ENCODE measurements at regions of chr14 and their contacts with region 1.

Region 1: DNA sequence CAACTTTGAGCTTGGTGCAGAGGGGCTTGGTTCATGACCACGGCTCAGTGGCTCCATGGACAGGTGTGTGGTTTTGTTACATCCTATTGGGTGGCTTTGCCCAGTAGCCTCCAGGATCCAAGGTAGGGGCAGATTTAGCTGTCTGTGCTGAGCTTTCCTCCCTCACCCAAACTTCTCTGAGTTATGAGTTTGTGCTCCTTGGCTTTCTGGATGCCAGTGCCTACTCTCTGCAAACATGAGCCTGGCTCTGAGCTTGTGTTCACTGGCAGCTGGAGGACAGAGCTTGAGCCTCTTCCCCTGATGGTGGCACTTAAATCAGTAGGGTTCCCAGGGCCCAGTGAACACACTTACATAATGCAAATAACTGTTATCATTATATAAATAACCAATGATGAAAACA is 45.3 kb upstream of the HECTD1 start:
- DNase-seq: no peak
- ATAC-seq: no peak
- H3K4me3 ChIP-seq: no peak overlapping the region
- H3K4me3 Mint-ChIP-seq: no peak overlapping the region
- H3K27ac ChIP-seq: no peak overlapping the region
- H3K27ac Mint-ChIP-seq: no peak overlapping the region
- H3K4me1 ChIP-seq: no peaks in the 10 kb centered on the region
- H3K4me1 Mint-ChIP-seq: no peaks in the 10 kb centered on the region
- H3K27me3 ChIP-seq: no peaks in the 10 kb centered on the region
- H3K27me3 Mint-ChIP-seq: peaks cover 0 to 3% of the 10 kb centered on the region in 2 donors

Region 2: GRCh38 chr14:31230559-31230958 is 22.3 kb before region 1 on chr14:
- CTCF ChIA-PET with region 1: no interaction called
- POLR2A ChIA-PET with region 1: interaction called in 1 of 2 experiments, 11 read pairs
- DNase-seq: no peak
- ATAC-seq: no peak
- H3K4me3 ChIP-seq: no peak overlapping the region
- H3K4me3 Mint-ChIP-seq: no peak overlapping the region
- H3K27ac ChIP-seq: no peak overlapping the region
- H3K27ac Mint-ChIP-seq: no peak overlapping the region
- H3K4me1 ChIP-seq: no peaks in the 10 kb centered on the region
- H3K4me1 Mint-ChIP-seq: no peaks in the 10 kb centered on the region
- H3K27me3 ChIP-seq: peaks cover 0 to 3% of the 10 kb centered on the region in 2 experiments
- H3K27me3 Mint-ChIP-seq: peaks cover 0 to 1% of the 10 kb centered on the region in 2 donors